Thyroid gland (tissue), 4 donors: ENCODE measurements at regions of chr15 and their contacts with region 1.

Region 1: GRCh38 chr15:78195735-78196201 is 38.6 kb downstream of the ACSBG1 start:
- DNase-seq: peak; percentile 47 to 48
- H3K4me3 ChIP-seq: no peak overlapping the region
- H3K27ac ChIP-seq: no peak overlapping the region
- H3K4me1 ChIP-seq: no peaks in the 10 kb centered on the region
- H3K27me3 ChIP-seq: no peaks in the 10 kb centered on the region
- CTCF ChIP-seq: peak in 5 of 6 experiments; percentile 11 to 76 (median 72)
- POLR2A ChIP-seq: no peak

Region 2: DNA sequence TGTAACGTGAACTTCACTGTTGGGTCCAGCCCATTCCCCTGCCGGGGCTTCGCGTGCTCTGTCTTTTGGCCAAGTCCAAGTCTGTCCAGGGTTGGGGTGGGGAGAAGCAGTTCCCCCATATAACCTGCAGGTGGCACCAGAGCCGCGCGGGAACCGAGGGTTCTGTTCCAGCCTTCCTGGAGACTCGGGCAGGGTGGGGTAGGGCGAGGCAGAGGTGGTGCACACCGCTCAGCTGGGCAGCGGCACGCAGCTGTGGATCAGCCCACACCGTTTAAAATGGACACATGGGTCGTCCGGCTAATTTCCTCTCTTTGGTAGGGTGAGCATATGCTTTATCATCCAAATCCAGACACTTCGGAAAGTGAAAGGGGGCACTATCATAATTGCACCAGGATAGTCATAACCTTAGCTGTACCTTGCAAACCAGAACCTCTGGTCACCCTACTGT is 236.3 kb before region 1 on chr15:
- intact Hi-C with region 1: loop called (anchors 5 kb)
- DNase-seq: peak; percentile 71 to 80
- H3K4me3 ChIP-seq: no peak overlapping the region
- H3K27ac ChIP-seq: no peak overlapping the region
- H3K4me1 ChIP-seq: peaks cover 0 to 6% of the 10 kb centered on the region in 2 donors
- H3K27me3 ChIP-seq: no peaks in the 10 kb centered on the region
- CTCF ChIP-seq: peak in 5 of 6 experiments; percentile 82 to 94 (median 90)
- POLR2A ChIP-seq: no peak

Region 3: DNA sequence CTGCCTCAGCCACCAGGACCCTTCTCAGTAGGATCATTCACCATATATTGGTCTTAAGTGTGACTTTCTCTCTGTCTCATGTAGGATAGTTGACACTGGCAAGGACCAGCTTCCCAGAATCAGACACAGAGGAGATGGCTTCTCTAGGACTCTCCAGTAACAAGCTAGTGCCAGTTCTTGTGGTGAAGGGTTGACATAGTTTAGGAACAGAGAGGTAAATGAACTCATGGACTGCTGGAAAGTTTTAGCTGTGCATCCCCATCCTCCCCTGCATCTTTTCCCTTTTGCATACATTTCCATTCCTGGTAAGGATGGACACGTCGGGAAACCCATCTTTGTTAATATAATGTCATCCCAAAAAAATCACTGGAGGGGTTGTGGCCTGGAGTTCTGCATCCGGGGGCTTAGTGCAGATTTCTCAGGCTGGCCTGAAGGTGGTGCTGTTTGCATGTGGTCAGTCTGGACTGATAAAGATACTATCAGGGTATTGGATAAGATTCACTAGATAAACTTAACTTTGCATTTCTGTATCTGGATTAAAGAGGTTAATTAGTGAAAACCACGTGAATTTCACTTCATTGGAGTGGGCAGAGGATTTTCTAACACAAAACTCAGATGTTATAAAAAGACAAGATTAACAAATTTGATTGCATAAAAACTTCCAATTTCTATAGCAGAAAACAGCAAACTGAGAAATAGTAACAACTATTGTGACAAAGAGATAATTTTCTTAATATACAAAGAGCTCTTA is 229.1 kb before region 1 on chr15:
- intact Hi-C with region 1: loop called (anchors 5 kb)
- DNase-seq: peak; percentile 32 to 53
- H3K4me3 ChIP-seq: no peak overlapping the region
- H3K27ac ChIP-seq: no peak overlapping the region
- H3K4me1 ChIP-seq: no peaks in the 10 kb centered on the region
- H3K27me3 ChIP-seq: no peaks in the 10 kb centered on the region
- CTCF ChIP-seq: peak; percentile 49 to 86 (median 83)
- POLR2A ChIP-seq: no peak

Region 4: GRCh38 chr15:78108299-78109084 is 87.3 kb before region 1 on chr15:
- intact Hi-C with region 1: loop called (anchors 5 kb)
- DNase-seq: peak; percentile 84 to 90
- H3K4me3 ChIP-seq: no peak overlapping the region
- H3K27ac ChIP-seq: no peak overlapping the region
- H3K4me1 ChIP-seq: no peaks in the 10 kb centered on the region
- H3K27me3 ChIP-seq: no peaks in the 10 kb centered on the region
- CTCF ChIP-seq: peak; percentile 85 to 97 (median 95)
- POLR2A ChIP-seq: no peak

Region 5: GRCh38 chr15:78131295-78132061 is 64.3 kb before region 1 on chr15 and contains the start of gene CIB2:
- intact Hi-C with region 1: loop called (anchors 5 kb)
- DNase-seq: peak; percentile 61 to 72
- H3K4me3 ChIP-seq: peak within 1 kb of the TSS; percentile 68 to 75 (median 72)
- H3K27ac ChIP-seq: peak within 1 kb of the TSS; percentile 72 to 77 (median 72)
- H3K4me1 ChIP-seq: peaks cover 9 to 13% of the 10 kb centered on the region in 2 donors
- H3K27me3 ChIP-seq: no peaks in the 10 kb centered on the region
- CTCF ChIP-seq: peak in 5 of 6 experiments; percentile 44 to 97 (median 81)
- POLR2A ChIP-seq: peak in 1 of 2 donors; percentile 33
- total RNA-seq, gene CIB2: 4.1 to 7.5 (median 4.9) TPM